CD4-positive, alpha-beta T cell (primary cell): ENCODE measurements at regions of chr6 and their contacts with region 1.

Region 1: GRCh38 chr6:7140631-7141378 is 33.0 kb downstream of the RREB1 start:
- DNase-seq: peak; percentile 66 to 87 (median 73)
- ATAC-seq: peak; percentile 69
- H3K4me3 ChIP-seq: peak overlapping the region; percentile 59
- H3K4me3 Mint-ChIP-seq: peak overlapping the region; percentile 90
- H3K27ac ChIP-seq: peak overlapping the region in 1 of 2 donors; percentile 81
- H3K27ac Mint-ChIP-seq: peak overlapping the region; percentile 93
- H3K4me1 ChIP-seq: peaks cover 49% of the 10 kb centered on the region
- H3K4me1 Mint-ChIP-seq: peaks cover 83% of the 10 kb centered on the region
- H3K27me3 ChIP-seq: no peaks in the 10 kb centered on the region
- H3K27me3 Mint-ChIP-seq: no peaks in the 10 kb centered on the region
- CTCF ChIP-seq: no peak

Region 2: GRCh38 chr6:7051233-7052114 is 89.3 kb before region 1 on chr6:
- CTCF ChIA-PET with region 1: no interaction called
- POLR2A ChIA-PET with region 1: interaction called, 3 read pairs
- intact Hi-C with region 1: loop called (anchors 5 kb)
- DNase-seq: peak; percentile 29 to 79 (median 53)
- ATAC-seq: peak; percentile 73
- H3K4me3 ChIP-seq: peak overlapping the region; percentile 74
- H3K4me3 Mint-ChIP-seq: peak overlapping the region; percentile 82
- H3K27ac ChIP-seq: peak overlapping the region in 1 of 2 donors; percentile 59
- H3K27ac Mint-ChIP-seq: peak overlapping the region; percentile 42
- H3K4me1 ChIP-seq: peaks cover 19% of the 10 kb centered on the region
- H3K4me1 Mint-ChIP-seq: peaks cover 13% of the 10 kb centered on the region
- H3K27me3 ChIP-seq: no peaks in the 10 kb centered on the region
- H3K27me3 Mint-ChIP-seq: no peaks in the 10 kb centered on the region
- CTCF ChIP-seq: no peak

Region 3: GRCh38 chr6:7062451-7063162 is 78.2 kb before region 1 on chr6:
- CTCF ChIA-PET with region 1: no interaction called
- POLR2A ChIA-PET with region 1: no interaction called
- intact Hi-C with region 1: no loop called
- DNase-seq: no peak
- ATAC-seq: no peak
- H3K4me3 ChIP-seq: no peak overlapping the region
- H3K4me3 Mint-ChIP-seq: no peak overlapping the region
- H3K27ac ChIP-seq: no peak overlapping the region
- H3K27ac Mint-ChIP-seq: no peak overlapping the region
- H3K4me1 ChIP-seq: no peaks in the 10 kb centered on the region
- H3K4me1 Mint-ChIP-seq: no peaks in the 10 kb centered on the region
- H3K27me3 ChIP-seq: no peaks in the 10 kb centered on the region
- H3K27me3 Mint-ChIP-seq: no peaks in the 10 kb centered on the region
- CTCF ChIP-seq: no peak

Region 4: GRCh38 chr6:7107578-7108195 is 33.1 kb before region 1 on chr6 and contains the start of gene RREB1:
- CTCF ChIA-PET with region 1: interaction called, 6 read pairs
- POLR2A ChIA-PET with region 1: interaction called, 85 read pairs
- intact Hi-C with region 1: loop called (anchors 2 kb)
- DNase-seq: peak; percentile 26 to 79 (median 48)
- ATAC-seq: peak; percentile 50
- H3K4me3 ChIP-seq: peak within 1 kb of the TSS; percentile 93
- H3K4me3 Mint-ChIP-seq: peak within 1 kb of the TSS; percentile 100
- H3K27ac ChIP-seq: peak within 1 kb of the TSS; percentile 63 to 74
- H3K27ac Mint-ChIP-seq: peak within 1 kb of the TSS; percentile 93
- H3K4me1 ChIP-seq: peaks cover 21% of the 10 kb centered on the region
- H3K4me1 Mint-ChIP-seq: peaks cover 43% of the 10 kb centered on the region
- H3K27me3 ChIP-seq: no peaks in the 10 kb centered on the region
- H3K27me3 Mint-ChIP-seq: no peaks in the 10 kb centered on the region
- CTCF ChIP-seq: no peak
- total RNA-seq, gene RREB1: 56.5 to 60.0 TPM

Region 5: GRCh38 chr6:7112741-7113313 is 28.0 kb before region 1 on chr6:
- CTCF ChIA-PET with region 1: interaction called, 6 read pairs
- POLR2A ChIA-PET with region 1: interaction called, 85 read pairs
- intact Hi-C with region 1: loop called (anchors 2 kb)
- DNase-seq: peak in 13 of 14 experiments; percentile 22 to 84 (median 53)
- ATAC-seq: peak; percentile 70
- H3K4me3 ChIP-seq: no peak overlapping the region
- H3K4me3 Mint-ChIP-seq: peak overlapping the region; percentile 88
- H3K27ac ChIP-seq: peak overlapping the region in 1 of 2 donors; percentile 33
- H3K27ac Mint-ChIP-seq: peak overlapping the region; percentile 87
- H3K4me1 ChIP-seq: peaks cover 45% of the 10 kb centered on the region
- H3K4me1 Mint-ChIP-seq: peaks cover 76% of the 10 kb centered on the region
- H3K27me3 ChIP-seq: no peaks in the 10 kb centered on the region
- H3K27me3 Mint-ChIP-seq: no peaks in the 10 kb centered on the region
- CTCF ChIP-seq: no peak

Region 6: GRCh38 chr6:7129784-7130569 is 10.8 kb before region 1 on chr6:
- CTCF ChIA-PET with region 1: interaction called, 7 read pairs
- POLR2A ChIA-PET with region 1: interaction called, 18 read pairs
- intact Hi-C with region 1: no loop called
- DNase-seq: peak in 3 of 14 experiments; percentile 33 to 66 (median 64)
- ATAC-seq: peak; percentile 33
- H3K4me3 ChIP-seq: no peak overlapping the region
- H3K4me3 Mint-ChIP-seq: peak overlapping the region; percentile 52
- H3K27ac ChIP-seq: peak overlapping the region in 1 of 2 donors; percentile 39
- H3K27ac Mint-ChIP-seq: peak overlapping the region; percentile 82
- H3K4me1 ChIP-seq: peaks cover 52% of the 10 kb centered on the region
- H3K4me1 Mint-ChIP-seq: peaks cover 92% of the 10 kb centered on the region
- H3K27me3 ChIP-seq: no peaks in the 10 kb centered on the region
- H3K27me3 Mint-ChIP-seq: no peaks in the 10 kb centered on the region
- CTCF ChIP-seq: no peak

Region 7: GRCh38 chr6:7154341-7155139 is 13.7 kb after region 1 on chr6:
- CTCF ChIA-PET with region 1: interaction called, 3 read pairs
- POLR2A ChIA-PET with region 1: interaction called, 10 read pairs
- intact Hi-C with region 1: no loop called
- DNase-seq: peak in 2 of 14 experiments; percentile 41
- ATAC-seq: peak; percentile 72
- H3K4me3 ChIP-seq: no peak overlapping the region
- H3K4me3 Mint-ChIP-seq: peak overlapping the region; percentile 35
- H3K27ac ChIP-seq: no peak overlapping the region
- H3K27ac Mint-ChIP-seq: peak overlapping the region; percentile 84
- H3K4me1 ChIP-seq: peaks cover 54% of the 10 kb centered on the region
- H3K4me1 Mint-ChIP-seq: peaks cover 86% of the 10 kb centered on the region
- H3K27me3 ChIP-seq: no peaks in the 10 kb centered on the region
- H3K27me3 Mint-ChIP-seq: no peaks in the 10 kb centered on the region
- CTCF ChIP-seq: no peak

Region 8: DNA sequence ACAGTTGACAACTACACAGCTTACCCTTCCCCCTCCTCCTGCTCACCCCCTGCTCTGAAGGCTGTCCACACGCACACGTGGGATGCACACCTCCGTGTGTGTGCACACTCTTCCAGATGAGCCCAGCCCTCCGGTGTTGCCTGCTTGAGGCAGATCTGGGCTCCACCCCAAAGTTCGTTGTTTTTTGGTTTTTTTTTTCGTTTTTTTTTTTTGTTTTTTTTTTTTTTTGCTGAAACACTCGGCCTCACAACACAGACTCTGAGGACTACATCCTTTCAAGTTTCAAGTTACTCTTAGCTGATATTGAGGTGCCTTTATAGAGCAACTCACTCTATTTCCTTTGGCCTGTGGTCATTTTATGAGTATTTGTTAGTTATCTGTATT is 55.2 kb after region 1 on chr6:
- CTCF ChIA-PET with region 1: no interaction called
- POLR2A ChIA-PET with region 1: no interaction called
- intact Hi-C with region 1: loop called (anchors 5 kb)
- DNase-seq: peak in 7 of 14 experiments; percentile 9 to 47 (median 31)
- ATAC-seq: peak; percentile 92
- H3K4me3 ChIP-seq: no peak overlapping the region
- H3K4me3 Mint-ChIP-seq: peak overlapping the region; percentile 84
- H3K27ac ChIP-seq: no peak overlapping the region
- H3K27ac Mint-ChIP-seq: peak overlapping the region; percentile 91
- H3K4me1 ChIP-seq: peaks cover 8% of the 10 kb centered on the region
- H3K4me1 Mint-ChIP-seq: peaks cover 50% of the 10 kb centered on the region
- H3K27me3 ChIP-seq: no peaks in the 10 kb centered on the region
- H3K27me3 Mint-ChIP-seq: no peaks in the 10 kb centered on the region
- CTCF ChIP-seq: no peak